ENCODE measurements at regions of chr14 and their contacts with region 1.

Region 1: GRCh38 chr14:23120541-23121251 is 1.6 kb upstream of the CEBPE start:
- DNase-seq: peak; percentile 94 to 95 (median 95)
- H3K4me3 ChIP-seq: no peak overlapping the region
- H3K27ac ChIP-seq: peak overlapping the region in 1 of 2 donors; percentile 56
- H3K4me1 ChIP-seq: peaks cover 5 to 8% (median 5%) of the 10 kb centered on the region in 3 donors
- H3K27me3 ChIP-seq: no peaks in the 10 kb centered on the region
- CTCF ChIP-seq: peak; percentile 100

Region 2: GRCh38 chr14:23025151-23025814 is 95.4 kb before region 1 on chr14:
- intact Hi-C with region 1: no loop called
- DNase-seq: peak in 4 of 5 donors; percentile 88 to 95 (median 92)
- H3K4me3 ChIP-seq: peak overlapping the region in 1 of 3 donors; percentile 3
- H3K27ac ChIP-seq: no peak overlapping the region
- H3K4me1 ChIP-seq: peaks cover 0 to 5% (median 0%) of the 10 kb centered on the region in 3 donors
- H3K27me3 ChIP-seq: no peaks in the 10 kb centered on the region
- CTCF ChIP-seq: no peak

Region 3: DNA sequence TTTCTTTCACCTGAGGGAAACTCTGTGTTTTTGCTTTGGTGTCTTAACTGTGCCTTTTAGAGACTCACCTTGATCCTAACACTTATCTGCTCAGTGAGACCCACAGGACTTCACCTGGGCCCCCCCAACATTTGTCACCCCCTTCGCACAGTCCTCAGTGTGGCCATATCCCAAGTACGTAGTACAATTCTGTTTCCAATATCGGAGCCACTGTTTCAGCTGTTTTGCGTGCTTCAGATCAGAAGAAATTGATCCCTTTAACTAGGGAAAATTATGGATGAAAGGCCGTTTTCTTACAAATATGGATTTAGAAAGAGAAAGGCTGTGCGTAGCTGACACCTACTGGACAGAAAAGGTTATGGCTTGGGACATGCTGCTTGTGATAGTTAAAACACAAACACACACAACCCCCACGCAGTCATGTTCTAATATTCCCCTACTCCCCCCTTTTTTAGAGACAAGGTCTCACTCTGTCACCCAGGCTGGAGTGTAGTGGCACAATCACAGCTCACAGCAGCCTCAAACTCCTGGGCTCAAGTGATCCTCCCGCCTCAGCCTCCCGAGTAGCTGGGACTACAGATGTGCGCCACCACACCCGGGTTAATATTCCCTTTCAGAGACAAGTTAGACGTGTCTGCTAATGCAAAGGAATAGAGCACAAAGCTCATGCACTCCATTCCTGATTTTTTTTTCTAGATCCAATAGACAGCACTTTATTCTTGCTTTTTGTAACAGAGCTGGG is 66.4 kb after region 1 on chr14:
- intact Hi-C with region 1: loop called (anchors 5 kb)
- DNase-seq: peak in 4 of 5 donors; percentile 42 to 78 (median 66)
- H3K4me3 ChIP-seq: peak overlapping the region in 2 of 3 donors; percentile 24 to 50
- H3K27ac ChIP-seq: no peak overlapping the region
- H3K4me1 ChIP-seq: peaks cover 0 to 6% (median 0%) of the 10 kb centered on the region in 3 donors
- H3K27me3 ChIP-seq: no peaks in the 10 kb centered on the region
- CTCF ChIP-seq: peak; percentile 89

Measured in kidney (tissue), 22 donors.